ENCODE measurements at regions of chr2 and their contacts with region 1.

Region 1: DNA sequence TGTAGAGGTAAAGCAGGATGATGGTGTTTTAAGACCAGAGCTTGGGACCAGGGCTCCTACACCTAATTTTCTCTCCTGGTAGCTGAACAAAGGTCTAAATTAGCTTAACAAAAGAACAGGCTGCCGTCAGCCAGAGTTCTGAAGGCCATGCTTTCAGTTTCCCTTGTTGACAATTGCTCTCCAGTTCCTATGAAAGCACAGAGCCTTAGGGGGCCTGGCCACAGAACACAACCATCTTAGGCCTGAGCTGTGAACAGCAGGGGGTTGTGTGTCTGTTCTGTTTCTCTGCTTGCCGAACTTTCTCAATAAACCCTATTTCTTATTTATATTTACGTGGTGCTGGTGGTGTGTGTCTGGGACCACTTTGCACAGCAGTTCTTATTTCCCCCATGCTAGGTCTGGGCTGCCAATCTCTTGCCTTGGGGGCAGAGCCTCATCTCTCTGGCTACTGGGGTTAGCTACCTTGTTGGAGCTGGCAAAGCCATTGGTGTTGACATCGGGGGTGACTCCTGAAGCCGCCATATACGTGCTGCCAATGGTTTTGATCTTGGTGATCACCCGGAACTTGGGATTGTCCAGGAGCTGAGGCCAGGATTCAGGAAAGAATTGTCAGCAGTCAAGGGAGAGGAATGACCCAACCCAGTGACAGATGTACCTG is 29.0 kb downstream of the CENPO start:
- DNase-seq: peak; percentile 56
- ATAC-seq: peak; percentile 81
- H3K4me3 Mint-ChIP-seq: peak overlapping the region; percentile 21; the same call in 1 of the 2 replicates
- H3K27ac Mint-ChIP-seq: peak overlapping the region; percentile 94
- H3K4me1 Mint-ChIP-seq: peaks cover 42% of the 10 kb centered on the region
- H3K27me3 Mint-ChIP-seq: no peaks in the 10 kb centered on the region
- CTCF ChIP-seq: no peak

Region 2: GRCh38 chr2:24613154-24613814 is 208.9 kb before region 1 on chr2:
- CTCF ChIA-PET with region 1: interaction called, 42 read pairs
- POLR2A ChIA-PET with region 1: interaction called, 3 read pairs
- DNase-seq: peak; percentile 46
- ATAC-seq: peak; percentile 93
- H3K4me3 Mint-ChIP-seq: no peak overlapping the region
- H3K27ac Mint-ChIP-seq: peak overlapping the region; percentile 97
- H3K4me1 Mint-ChIP-seq: peaks cover 33% of the 10 kb centered on the region
- H3K27me3 Mint-ChIP-seq: no peaks in the 10 kb centered on the region
- CTCF ChIP-seq: peak; percentile 56; the same call in 1 of the 2 replicates